Activated CD4-positive, alpha-beta T cell treated with anti-CD3 and anti-CD28 coated beads, Interleukin-2, amount 10 ng/mL, durations not matched to agents 24 days and 14 days (primary cell): ENCODE measurements at regions of chr2 and their contacts with region 1.

Region 1: DNA sequence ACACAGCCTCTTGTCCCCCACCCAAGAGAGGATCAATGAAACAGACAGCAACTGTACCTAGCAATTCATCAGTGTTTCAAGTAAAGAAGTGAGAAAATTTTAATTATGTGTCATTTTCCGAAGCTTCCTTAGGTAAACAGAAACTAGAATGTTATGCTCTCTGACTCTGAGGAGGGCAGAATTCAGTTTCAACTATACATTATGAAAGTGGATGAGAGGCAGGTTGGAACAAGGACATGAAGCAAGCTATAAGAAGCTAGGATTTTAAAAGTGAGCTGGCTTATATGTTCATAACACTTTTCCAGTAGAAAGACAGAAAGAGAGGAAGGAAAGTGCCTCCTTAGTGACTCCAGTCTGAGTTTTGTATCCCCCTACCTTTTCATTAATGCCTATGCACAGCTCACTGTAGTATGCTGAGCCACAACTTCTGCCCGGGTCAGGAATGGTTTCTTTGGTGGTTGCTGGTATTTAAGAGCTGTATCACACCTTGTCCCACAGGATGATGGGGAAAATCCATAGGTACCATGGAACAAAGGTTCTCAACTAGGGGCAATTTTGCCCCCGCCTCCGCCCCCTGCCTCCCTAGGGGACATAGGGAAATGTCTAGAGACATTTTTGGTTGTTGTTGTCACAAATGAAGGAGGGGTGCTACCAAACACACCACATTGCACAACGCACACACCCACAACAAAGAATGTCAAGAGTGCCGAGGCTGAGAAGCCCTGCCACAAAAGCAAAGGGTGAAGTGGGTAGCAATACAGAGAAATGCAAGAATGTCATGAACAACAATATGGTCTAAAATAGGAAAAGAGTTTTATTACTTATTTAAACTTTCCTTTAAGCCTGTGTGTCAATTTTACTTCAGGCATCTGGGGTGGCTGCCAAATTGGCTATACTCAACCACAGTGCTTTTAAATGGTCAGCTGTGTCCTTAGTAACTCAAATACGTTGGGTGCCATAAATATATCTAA is 161.0 kb upstream of the ZFP36L2 start:
- DNase-seq: peak; percentile 54
- H3K4me3 Mint-ChIP-seq: peak overlapping the region; percentile 19
- H3K27ac Mint-ChIP-seq: peak overlapping the region; percentile 21
- H3K4me1 Mint-ChIP-seq: peaks cover 23% of the 10 kb centered on the region
- H3K27me3 Mint-ChIP-seq: no peaks in the 10 kb centered on the region

Region 2: GRCh38 chr2:43293744-43294695 is 93.4 kb before region 1 on chr2:
- intact Hi-C with region 1: loop called (anchors 1 kb)
- DNase-seq: peak; percentile 88
- H3K4me3 Mint-ChIP-seq: peak overlapping the region; percentile 49
- H3K27ac Mint-ChIP-seq: peak overlapping the region; percentile 76
- H3K4me1 Mint-ChIP-seq: peaks cover 24% of the 10 kb centered on the region
- H3K27me3 Mint-ChIP-seq: no peaks in the 10 kb centered on the region